Ovary (tissue), 10 donors: ENCODE measurements at regions of chr18 and their contacts with region 1.

Region 1: DNA sequence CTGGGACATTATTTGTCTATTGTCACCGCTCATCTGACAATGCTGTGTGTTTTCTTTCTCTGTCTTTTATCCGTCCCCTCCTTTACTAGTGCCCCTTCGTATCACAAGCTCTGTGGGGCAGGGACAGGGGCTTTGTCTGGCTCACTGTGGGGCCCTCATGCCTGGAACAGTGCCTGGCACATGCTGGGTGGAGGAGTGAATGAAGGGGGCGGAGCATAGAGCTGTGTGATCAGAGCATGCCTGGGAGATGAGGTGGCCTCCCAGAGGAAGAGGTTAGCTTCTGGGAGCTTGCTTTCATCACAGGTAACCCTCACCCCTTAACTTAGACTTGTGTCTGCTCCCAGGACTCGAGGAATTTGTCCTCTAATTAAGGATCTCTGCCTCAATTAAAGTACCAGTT is 16.4 kb downstream of the MTCL1 start:
- DNase-seq: no peak
- H3K4me3 ChIP-seq: no peak overlapping the region
- H3K27ac ChIP-seq: no peak overlapping the region
- H3K4me1 ChIP-seq: no peaks in the 10 kb centered on the region
- H3K27me3 ChIP-seq: no peaks in the 10 kb centered on the region
- CTCF ChIP-seq: no peak
- EP300 ChIP-seq: no peak
- POLR2A ChIP-seq: no peak

Region 2: GRCh38 chr18:8174771-8175170 is 546.9 kb before region 1 on chr18:
- intact Hi-C with region 1: loop called in 1 of 4 experiments (anchors 5 kb)
- DNase-seq: no peak
- H3K4me3 ChIP-seq: no peak overlapping the region
- H3K27ac ChIP-seq: no peak overlapping the region
- H3K4me1 ChIP-seq: peaks cover 8% of the 10 kb centered on the region
- H3K27me3 ChIP-seq: no peaks in the 10 kb centered on the region
- CTCF ChIP-seq: no peak
- EP300 ChIP-seq: no peak
- POLR2A ChIP-seq: no peak

Region 3: GRCh38 chr18:8800449-8800848 is 78.7 kb after region 1 on chr18:
- intact Hi-C with region 1: loop called in 1 of 4 experiments (anchors 5 kb)
- DNase-seq: peak in 1 of 5 donors; percentile 34
- H3K4me3 ChIP-seq: no peak overlapping the region
- H3K27ac ChIP-seq: no peak overlapping the region
- H3K4me1 ChIP-seq: peaks cover 2% of the 10 kb centered on the region
- H3K27me3 ChIP-seq: no peaks in the 10 kb centered on the region
- CTCF ChIP-seq: no peak
- EP300 ChIP-seq: no peak
- POLR2A ChIP-seq: no peak